Transverse colon (tissue), 4 donors: ENCODE measurements at regions of chr12 and their contacts with region 1.

Region 1: DNA sequence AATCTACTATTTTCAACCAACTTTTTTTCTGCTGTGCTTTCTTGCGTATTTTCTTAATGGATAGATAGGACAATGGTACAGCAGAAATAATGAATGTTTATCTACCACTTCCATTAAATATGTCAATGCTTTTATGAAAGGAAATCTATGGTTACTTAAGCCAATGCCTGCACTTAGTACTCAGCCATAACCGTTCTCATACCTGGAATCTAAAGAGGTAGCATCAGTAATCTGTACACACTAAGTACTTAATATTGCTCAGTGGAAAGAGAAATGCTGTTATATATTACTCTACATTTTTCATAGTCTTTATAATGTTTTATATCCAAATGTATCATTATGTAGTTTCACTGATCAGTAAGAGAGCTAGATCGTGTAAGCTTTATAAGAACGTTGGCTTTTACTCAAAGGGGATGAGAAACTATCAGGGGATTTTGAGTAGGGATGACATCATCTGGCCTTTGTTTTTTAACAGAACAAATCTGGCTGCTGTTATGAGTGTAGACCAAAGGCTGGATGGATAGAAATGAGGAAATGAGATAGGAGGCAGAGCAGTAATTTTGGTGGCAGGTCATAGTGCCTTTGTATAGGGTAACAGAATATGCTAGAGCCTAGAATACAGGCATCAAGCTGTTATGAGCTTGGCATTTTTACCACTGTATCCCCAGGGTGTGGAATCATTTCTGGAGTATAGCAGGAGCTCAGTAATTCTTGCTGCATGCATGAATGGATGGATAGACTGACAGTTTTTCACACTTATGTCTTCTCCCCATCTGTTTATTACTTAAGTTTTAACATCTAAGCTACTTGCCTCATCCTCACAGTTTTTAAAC is 34.0 kb downstream of the ALG10B start:
- DNase-seq: no peak
- H3K4me3 ChIP-seq: no peak overlapping the region
- H3K27ac ChIP-seq: no peak overlapping the region
- H3K4me1 ChIP-seq: no peaks in the 10 kb centered on the region
- H3K27me3 ChIP-seq: no peaks in the 10 kb centered on the region
- CTCF ChIP-seq: no peak
- EP300 ChIP-seq: no peak
- POLR2A ChIP-seq: no peak

Region 2: GRCh38 chr12:38392581-38393144 is 42.1 kb after region 1 on chr12:
- in situ Hi-C with region 1: no loop called
- intact Hi-C with region 1: no loop called
- DNase-seq: no peak
- H3K4me3 ChIP-seq: no peak overlapping the region
- H3K27ac ChIP-seq: no peak overlapping the region
- H3K4me1 ChIP-seq: no peaks in the 10 kb centered on the region
- H3K27me3 ChIP-seq: no peaks in the 10 kb centered on the region
- CTCF ChIP-seq: no peak
- EP300 ChIP-seq: no peak
- POLR2A ChIP-seq: no peak

Region 3: GRCh38 chr12:38469715-38470114 is 119.2 kb after region 1 on chr12:
- in situ Hi-C with region 1: loop called in 1 of 4 experiments (anchors 25 kb)
- intact Hi-C with region 1: no loop called
- DNase-seq: no peak
- H3K4me3 ChIP-seq: no peak overlapping the region
- H3K27ac ChIP-seq: no peak overlapping the region
- H3K4me1 ChIP-seq: no peaks in the 10 kb centered on the region
- H3K27me3 ChIP-seq: no peaks in the 10 kb centered on the region
- CTCF ChIP-seq: no peak
- EP300 ChIP-seq: no peak
- POLR2A ChIP-seq: no peak